Pancreas (tissue), 10 donors: ENCODE measurements at regions of chr20 and their contacts with region 1.

Region 1: GRCh38 chr20:37498066-37498665 is 22.9 kb upstream of the NNAT start:
- DNase-seq: no peak
- ATAC-seq: no peak
- H3K4me3 ChIP-seq: no peak overlapping the region
- H3K27ac ChIP-seq: no peak overlapping the region
- H3K4me1 ChIP-seq: no peaks in the 10 kb centered on the region
- H3K27me3 ChIP-seq: no peaks in the 10 kb centered on the region
- CTCF ChIP-seq: no peak

Region 2: GRCh38 chr20:37406010-37406998 is 91.9 kb before region 1 on chr20:
- intact Hi-C with region 1: loop called in 1 of 3 experiments (anchors 10 kb)
- DNase-seq: peak in 3 of 6 donors; percentile 38 to 80 (median 50)
- ATAC-seq: peak; percentile 72 to 79 (median 76)
- H3K4me3 ChIP-seq: peak overlapping the region in 3 of 4 donors; percentile 15 to 41 (median 17)
- H3K27ac ChIP-seq: no peak overlapping the region
- H3K4me1 ChIP-seq: peaks cover 0 to 5% (median 0%) of the 10 kb centered on the region in 3 donors
- H3K27me3 ChIP-seq: no peaks in the 10 kb centered on the region
- CTCF ChIP-seq: no peak

Region 3: DNA sequence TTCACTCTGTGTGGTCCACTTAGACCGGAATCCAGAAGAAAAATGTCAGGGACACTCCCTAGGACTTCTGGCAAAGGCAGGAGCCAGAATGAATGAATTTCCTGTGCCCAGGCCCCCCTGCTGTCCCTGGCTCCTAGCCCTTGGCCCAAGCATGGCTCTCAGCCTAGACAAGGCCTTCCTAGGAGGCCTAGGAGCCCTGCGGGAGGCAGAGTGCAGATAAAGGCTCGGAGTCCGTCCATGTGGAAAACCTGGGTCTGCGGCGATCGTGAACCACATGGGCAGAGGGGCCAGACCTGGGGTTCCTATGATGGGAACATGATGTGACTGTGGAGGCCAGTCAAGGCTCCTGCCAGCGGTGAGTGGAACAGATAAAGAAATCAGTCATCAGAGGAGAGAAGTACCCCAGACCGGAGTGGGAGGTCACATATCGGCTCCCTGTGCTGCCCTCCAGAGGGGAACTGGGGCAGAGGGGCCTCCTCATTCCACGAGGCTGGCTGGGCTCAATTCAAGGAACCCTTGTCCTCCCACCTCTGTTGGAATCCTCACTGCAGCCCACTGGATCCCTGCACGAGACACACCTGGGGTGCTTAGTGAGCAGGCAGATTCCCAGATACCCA is 398.9 kb after region 1 on chr20:
- intact Hi-C with region 1: no loop called
- DNase-seq: peak in 1 of 6 donors; percentile 26
- ATAC-seq: peak in 2 of 4 donors; percentile 52 to 63
- H3K4me3 ChIP-seq: no peak overlapping the region
- H3K27ac ChIP-seq: peak overlapping the region in 1 of 4 donors; percentile 57
- H3K4me1 ChIP-seq: no peaks in the 10 kb centered on the region
- H3K27me3 ChIP-seq: peaks cover 0 to 4% (median 0%) of the 10 kb centered on the region in 4 donors
- CTCF ChIP-seq: no peak